ENCODE measurements at regions of chr20 and their contacts with region 1.

Region 1: DNA sequence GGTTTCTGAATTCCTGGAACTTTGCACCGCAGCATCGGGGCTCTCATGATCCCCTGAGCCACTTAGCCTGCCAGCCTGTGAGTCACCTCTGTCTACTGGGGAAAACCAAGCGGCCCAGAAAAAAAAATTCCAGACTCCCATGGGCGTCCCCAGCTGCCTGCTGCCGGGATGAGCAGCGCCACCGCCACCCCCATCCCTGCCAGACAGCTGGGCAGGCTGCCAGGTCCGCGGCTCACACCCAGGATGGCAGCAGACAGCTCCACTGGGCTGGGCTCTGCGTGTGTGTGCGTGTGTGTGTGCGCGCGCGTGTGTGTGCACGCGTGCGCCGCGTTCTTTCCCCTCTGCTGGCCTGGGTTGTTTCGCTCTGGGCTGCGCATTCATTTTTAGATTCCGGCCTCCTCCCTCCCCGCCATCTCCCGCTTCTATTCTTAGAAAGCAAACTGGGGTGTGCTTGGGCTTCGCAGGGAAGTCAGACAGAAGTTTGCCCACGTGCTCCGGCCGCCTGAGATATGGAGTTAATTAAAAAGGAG is 38.9 kb upstream of the PMEPA1 start:
- DNase-seq: peak; percentile 82 to 85
- ATAC-seq: peak; percentile 83 to 95 (median 92)
- H3K4me3 ChIP-seq: peak overlapping the region in 9 of 10 donors; percentile 18 to 44 (median 39)
- H3K27ac ChIP-seq: peak overlapping the region; percentile 26 to 93 (median 82)
- H3K4me1 ChIP-seq: peaks cover 13 to 41% (median 28%) of the 10 kb centered on the region in 9 donors
- H3K27me3 ChIP-seq: no peaks in the 10 kb centered on the region
- CTCF ChIP-seq: no peak

Region 2: GRCh38 chr20:57709931-57710799 is 38.5 kb before region 1 on chr20 and contains the start of gene PMEPA1:
- intact Hi-C with region 1: loop called in 3 of 10 experiments (anchors 5 kb)
- DNase-seq: peak; percentile 94 to 95
- ATAC-seq: peak; percentile 91 to 95 (median 93)
- H3K4me3 ChIP-seq: peak within 1 kb of the TSS; percentile 51 to 92 (median 80)
- H3K27ac ChIP-seq: peak within 1 kb of the TSS; percentile 69 to 96 (median 91)
- H3K4me1 ChIP-seq: peaks cover 12 to 70% (median 55%) of the 10 kb centered on the region in 9 donors
- H3K27me3 ChIP-seq: peaks cover 0 to 33% (median 0%) of the 10 kb centered on the region in 7 donors
- CTCF ChIP-seq: peak in 4 of 9 donors; percentile 16 to 35 (median 18)
- total RNA-seq, gene PMEPA1: 16.1 to 39.2 (median 30.4) TPM

Region 3: DNA sequence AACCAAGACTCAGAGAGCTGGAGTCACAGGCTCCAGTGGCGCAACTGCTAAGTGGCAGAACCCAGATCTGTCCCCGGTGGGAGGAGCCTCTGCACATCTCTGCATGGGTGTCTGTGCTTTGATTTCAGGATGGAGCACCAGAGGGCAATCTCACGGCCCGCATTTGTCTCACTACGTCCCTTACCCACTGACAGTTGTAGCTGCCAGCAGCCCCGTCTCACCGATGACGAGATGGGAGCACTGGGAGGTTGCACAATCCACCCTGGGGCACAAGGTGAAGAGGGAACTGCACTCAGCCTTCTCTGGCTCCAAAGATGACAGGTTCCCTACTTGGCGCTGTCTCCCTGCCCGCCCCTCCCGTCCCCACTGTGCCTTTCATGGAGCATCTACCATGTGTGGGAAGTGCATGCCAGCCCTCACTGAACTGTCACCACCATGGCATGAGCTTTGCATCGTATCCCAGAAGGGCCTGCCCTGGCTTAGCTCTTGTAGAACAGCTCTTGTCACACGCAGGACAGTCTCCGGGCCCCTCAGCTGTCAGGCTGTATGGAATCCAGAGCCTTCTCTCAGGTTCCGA is 61.0 kb after region 1 on chr20:
- intact Hi-C with region 1: loop called in 2 of 10 experiments (anchors 5 kb)
- DNase-seq: peak in 1 of 2 donors; percentile 53
- ATAC-seq: peak in 7 of 8 donors; percentile 32 to 80 (median 54)
- H3K4me3 ChIP-seq: no peak overlapping the region
- H3K27ac ChIP-seq: no peak overlapping the region
- H3K4me1 ChIP-seq: peaks cover 0 to 32% (median 7%) of the 10 kb centered on the region in 9 donors
- H3K27me3 ChIP-seq: peaks cover 0 to 5% (median 0%) of the 10 kb centered on the region in 7 donors
- CTCF ChIP-seq: peak in 1 of 9 donors; percentile 9

Region 4: GRCh38 chr20:57928181-57928580 is 179.5 kb after region 1 on chr20:
- intact Hi-C with region 1: loop called in 1 of 10 experiments (anchors 10 kb)
- DNase-seq: no peak
- ATAC-seq: no peak
- H3K4me3 ChIP-seq: no peak overlapping the region
- H3K27ac ChIP-seq: no peak overlapping the region
- H3K4me1 ChIP-seq: peaks cover 0 to 5% (median 0%) of the 10 kb centered on the region in 9 donors
- H3K27me3 ChIP-seq: peaks cover 0 to 4% (median 0%) of the 10 kb centered on the region in 7 donors
- CTCF ChIP-seq: no peak